ENCODE measurements at regions of chr20 and their contacts with region 1.

Region 1: DNA sequence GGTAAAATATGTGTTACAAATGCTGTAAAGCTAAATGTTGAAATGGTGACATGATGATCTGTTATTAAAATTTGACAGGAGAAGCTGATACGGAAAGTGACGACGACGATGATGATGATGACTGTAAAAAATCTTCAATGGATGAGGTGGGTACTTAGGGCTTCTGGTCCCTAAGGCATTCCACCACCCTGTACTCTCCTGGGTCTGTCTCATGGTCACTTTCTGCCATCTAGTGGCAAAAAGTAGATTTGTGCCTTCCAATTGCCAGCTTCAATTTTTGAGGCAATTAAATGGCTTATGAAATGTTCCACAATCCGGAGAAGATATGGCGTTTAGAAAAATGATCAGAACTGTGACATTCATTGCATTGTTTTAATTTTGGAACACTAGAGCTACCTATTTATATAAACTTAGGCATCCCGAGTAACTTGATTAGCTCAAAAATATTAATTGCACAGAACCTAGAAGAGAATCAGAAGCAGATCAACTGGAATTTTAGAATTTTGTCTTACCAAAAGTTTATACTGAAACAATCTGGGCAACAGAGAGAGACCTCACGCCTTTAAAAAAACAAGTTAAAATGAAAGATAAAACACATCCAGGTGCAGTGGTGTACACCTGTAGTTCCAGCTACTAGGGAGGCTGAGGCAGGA is 346.5 kb upstream of the PLCB4 start:
- DNase-seq: peak; percentile 83
- ATAC-seq: peak; percentile 98
- H3K4me3 ChIP-seq: no peak overlapping the region
- H3K27ac ChIP-seq: no peak overlapping the region
- H3K4me1 ChIP-seq: no peaks in the 10 kb centered on the region
- H3K27me3 ChIP-seq: no peaks in the 10 kb centered on the region
- CTCF ChIP-seq: peak; percentile 94
- EP300 ChIP-seq: no peak
- POLR2A ChIP-seq: no peak
- RAD21 ChIP-seq: peak; percentile 89

Region 2: DNA sequence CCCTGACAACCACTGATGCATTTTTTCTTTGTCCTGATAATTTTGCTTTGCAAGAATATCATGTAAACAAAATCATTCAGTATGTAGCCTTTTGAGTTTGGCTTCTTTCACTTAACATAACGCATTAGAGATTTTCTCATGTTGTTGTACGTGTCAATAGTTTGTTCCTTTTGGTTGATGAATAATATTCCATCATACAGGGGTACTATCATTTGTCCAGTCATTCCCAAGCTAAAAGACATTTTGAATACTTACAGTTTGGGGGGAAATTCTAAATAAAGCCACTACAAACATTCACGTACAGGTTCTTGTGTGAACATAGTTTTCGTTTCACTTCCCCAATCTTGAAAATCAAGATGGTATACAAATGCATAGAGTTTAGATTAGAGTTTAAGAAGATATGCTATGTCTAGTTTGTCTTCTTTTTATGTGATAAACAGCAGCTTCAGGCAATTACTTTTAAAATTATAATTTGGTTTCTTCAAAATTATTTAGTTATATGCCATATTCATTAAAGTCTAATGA is 787.3 kb before region 1 on chr20:
- CTCF ChIA-PET with region 1: interaction called, 33 read pairs
- POLR2A ChIA-PET with region 1: no interaction called
- in situ Hi-C with region 1: loop called (anchors 10 kb)
- intact Hi-C with region 1: loop called (anchors 1 kb)
- DNase-seq: no peak
- ATAC-seq: no peak
- H3K4me3 ChIP-seq: no peak overlapping the region
- H3K27ac ChIP-seq: no peak overlapping the region
- H3K4me1 ChIP-seq: peaks cover 14% of the 10 kb centered on the region
- H3K27me3 ChIP-seq: no peaks in the 10 kb centered on the region
- CTCF ChIP-seq: no peak
- EP300 ChIP-seq: no peak
- POLR2A ChIP-seq: no peak
- RAD21 ChIP-seq: no peak

Region 3: GRCh38 chr20:7980332-7981046 is 741.9 kb before region 1 on chr20:
- CTCF ChIA-PET with region 1: interaction called, 35 read pairs
- POLR2A ChIA-PET with region 1: no interaction called
- in situ Hi-C with region 1: loop called (anchors 5 kb)
- intact Hi-C with region 1: loop called (anchors 1 kb)
- DNase-seq: peak; percentile 79
- ATAC-seq: peak; percentile 88
- H3K4me3 ChIP-seq: peak overlapping the region in 1 of 3 experiments; percentile 0; a peak in 1 of 6 replicates
- H3K27ac ChIP-seq: no peak overlapping the region
- H3K4me1 ChIP-seq: peaks cover 22% of the 10 kb centered on the region
- H3K27me3 ChIP-seq: no peaks in the 10 kb centered on the region
- CTCF ChIP-seq: peak; percentile 76
- EP300 ChIP-seq: no peak
- POLR2A ChIP-seq: no peak
- RAD21 ChIP-seq: peak; percentile 50

Region 4: GRCh38 chr20:8043687-8044282 is 678.6 kb before region 1 on chr20:
- CTCF ChIA-PET with region 1: interaction called, 77 read pairs
- POLR2A ChIA-PET with region 1: interaction called, 3 read pairs
- in situ Hi-C with region 1: loop called (anchors 5 kb)
- intact Hi-C with region 1: loop called (anchors 1 kb)
- DNase-seq: peak; percentile 81
- ATAC-seq: peak; percentile 88
- H3K4me3 ChIP-seq: no peak overlapping the region
- H3K27ac ChIP-seq: no peak overlapping the region
- H3K4me1 ChIP-seq: peaks cover 26% of the 10 kb centered on the region; the same call in 1 of the 2 replicates
- H3K27me3 ChIP-seq: 0 out of 5 replicates have a peak, but pooled peaks cover 0 to 4% of the 10 kb centered on the region in 2 experiments
- CTCF ChIP-seq: peak; percentile 86
- EP300 ChIP-seq: no peak
- POLR2A ChIP-seq: no peak
- RAD21 ChIP-seq: peak; percentile 70

Region 5: DNA sequence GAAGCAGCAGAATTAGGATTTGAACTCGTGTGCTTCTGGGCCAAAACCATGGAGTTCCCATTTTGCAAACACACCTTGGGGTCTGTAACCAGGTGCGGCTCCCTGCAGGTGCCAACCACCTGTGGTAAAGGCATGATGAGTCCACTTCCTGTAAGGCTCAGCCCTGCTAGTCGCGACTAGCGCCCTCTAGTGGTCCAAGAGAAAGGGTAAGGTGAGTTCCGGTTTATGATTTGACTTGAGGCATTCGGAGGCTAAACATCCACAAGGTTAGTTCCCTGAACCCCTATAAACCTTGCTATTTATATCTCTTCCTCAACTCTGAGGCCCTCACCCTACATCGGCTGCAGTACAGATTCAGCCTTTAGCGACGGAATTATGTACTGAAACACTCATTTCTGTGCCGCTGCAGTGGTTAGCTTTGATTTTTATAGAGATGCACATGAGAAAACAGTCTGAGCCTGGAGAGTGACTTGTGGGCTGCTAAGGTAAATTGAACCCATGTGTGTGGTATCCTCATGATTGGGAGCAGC is 416.9 kb before region 1 on chr20:
- CTCF ChIA-PET with region 1: no interaction called
- POLR2A ChIA-PET with region 1: no interaction called
- in situ Hi-C with region 1: no loop called
- intact Hi-C with region 1: loop called (anchors 1 kb)
- DNase-seq: peak; percentile 83
- ATAC-seq: peak; percentile 97
- H3K4me3 ChIP-seq: no peak overlapping the region
- H3K27ac ChIP-seq: no peak overlapping the region
- H3K4me1 ChIP-seq: no peaks in the 10 kb centered on the region
- H3K27me3 ChIP-seq: no peaks in the 10 kb centered on the region
- CTCF ChIP-seq: peak; percentile 87
- EP300 ChIP-seq: no peak
- POLR2A ChIP-seq: no peak
- RAD21 ChIP-seq: peak; percentile 87

Region 6: DNA sequence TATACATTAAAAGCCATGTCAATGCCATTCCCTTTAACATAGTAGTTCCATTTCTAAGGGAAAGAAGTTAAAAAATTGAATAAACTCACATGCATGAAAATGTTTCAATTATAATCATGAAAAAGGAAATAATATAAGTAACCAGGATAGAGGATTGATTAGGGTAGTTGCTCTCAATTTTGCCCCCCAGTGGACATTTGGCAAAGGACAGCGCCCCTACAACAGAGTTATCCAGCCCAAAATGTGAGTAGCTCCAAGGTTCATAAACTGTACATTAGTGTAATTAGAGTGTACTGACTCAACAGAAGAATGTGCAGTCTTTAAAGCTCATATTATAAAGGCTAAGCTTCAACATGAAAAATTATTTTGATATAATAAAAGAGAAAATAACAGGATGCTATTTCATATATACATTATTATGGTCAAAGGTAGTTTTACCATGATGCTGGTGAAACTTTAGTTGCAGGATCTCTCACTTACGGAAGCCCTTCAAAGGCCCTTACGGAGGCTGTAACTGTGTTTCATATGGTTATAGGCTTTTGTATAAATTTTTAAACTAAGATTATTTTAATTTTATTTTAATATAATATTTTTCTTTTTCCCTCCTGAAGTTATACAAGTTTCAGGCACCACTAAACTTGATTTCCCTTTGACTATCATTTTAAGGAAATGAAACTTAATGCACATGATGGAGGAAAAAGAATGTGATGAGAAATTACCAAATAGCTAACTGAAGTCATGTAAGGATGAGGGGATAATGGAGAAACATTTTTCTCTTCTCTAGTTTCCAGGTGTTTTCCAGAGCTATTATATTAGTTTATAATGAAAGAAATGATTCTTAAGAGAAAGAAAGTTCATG is 186.8 kb before region 1 on chr20:
- CTCF ChIA-PET with region 1: no interaction called
- POLR2A ChIA-PET with region 1: no interaction called
- in situ Hi-C with region 1: no loop called
- intact Hi-C with region 1: loop called (anchors 2 kb)
- DNase-seq: peak; percentile 23
- ATAC-seq: peak; percentile 87
- H3K4me3 ChIP-seq: no peak overlapping the region
- H3K27ac ChIP-seq: no peak overlapping the region
- H3K4me1 ChIP-seq: no peaks in the 10 kb centered on the region
- H3K27me3 ChIP-seq: no peaks in the 10 kb centered on the region
- CTCF ChIP-seq: peak; percentile 57
- EP300 ChIP-seq: no peak
- POLR2A ChIP-seq: no peak
- RAD21 ChIP-seq: no peak

Region 7: GRCh38 chr20:8633366-8633765 is 89.0 kb before region 1 on chr20:
- CTCF ChIA-PET with region 1: no interaction called
- POLR2A ChIA-PET with region 1: no interaction called
- in situ Hi-C with region 1: no loop called
- intact Hi-C with region 1: no loop called
- DNase-seq: no peak
- ATAC-seq: no peak
- H3K4me3 ChIP-seq: no peak overlapping the region
- H3K27ac ChIP-seq: no peak overlapping the region
- H3K4me1 ChIP-seq: no peaks in the 10 kb centered on the region
- H3K27me3 ChIP-seq: no peaks in the 10 kb centered on the region
- CTCF ChIP-seq: no peak
- EP300 ChIP-seq: no peak
- POLR2A ChIP-seq: no peak
- RAD21 ChIP-seq: no peak

Region 8: DNA sequence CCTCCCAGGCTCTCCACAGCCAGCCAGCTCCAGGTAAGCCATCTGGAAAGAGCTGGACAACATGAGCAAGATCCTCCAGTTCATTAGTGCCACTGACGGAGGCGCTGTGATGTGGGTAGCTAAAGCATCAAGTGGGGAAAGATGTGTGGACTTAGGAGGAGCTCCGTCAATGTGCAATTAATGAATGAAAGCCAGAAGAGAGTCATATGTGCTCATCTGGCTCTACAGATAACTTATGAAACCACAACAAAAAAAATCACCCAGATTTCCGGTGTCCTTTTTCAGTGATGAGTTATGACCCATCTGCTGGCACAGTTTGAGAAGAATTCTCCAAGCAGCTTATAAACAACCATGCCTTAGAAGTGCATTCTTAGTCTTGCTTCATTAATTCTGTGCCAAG is 34.7 kb after region 1 on chr20:
- CTCF ChIA-PET with region 1: no interaction called
- POLR2A ChIA-PET with region 1: no interaction called
- in situ Hi-C with region 1: no loop called
- intact Hi-C with region 1: no loop called
- DNase-seq: no peak
- ATAC-seq: no peak
- H3K4me3 ChIP-seq: no peak overlapping the region
- H3K27ac ChIP-seq: no peak overlapping the region
- H3K4me1 ChIP-seq: peaks cover 6% of the 10 kb centered on the region; the same call in 1 of the 2 replicates
- H3K27me3 ChIP-seq: no peaks in the 10 kb centered on the region
- CTCF ChIP-seq: no peak
- EP300 ChIP-seq: no peak
- POLR2A ChIP-seq: no peak
- RAD21 ChIP-seq: no peak